CD8-positive, alpha-beta T cell (primary cell): ENCODE measurements at regions of chr5 and their contacts with region 1.

Region 1: GRCh38 chr5:137754126-137754960 is at the start of gene HNRNPA0:
- DNase-seq: peak; percentile 90 to 99 (median 98)
- ATAC-seq: peak; percentile 82
- H3K4me3 ChIP-seq: peak within 1 kb of the TSS; percentile 92 to 96
- H3K4me3 Mint-ChIP-seq: peak within 1 kb of the TSS; percentile 99
- H3K27ac ChIP-seq: peak within 1 kb of the TSS; percentile 98 to 100
- H3K27ac Mint-ChIP-seq: peak within 1 kb of the TSS; percentile 100
- H3K4me1 ChIP-seq: peaks cover 26% of the 10 kb centered on the region
- H3K4me1 Mint-ChIP-seq: peaks cover 32% of the 10 kb centered on the region
- H3K27me3 ChIP-seq: no peaks in the 10 kb centered on the region
- H3K27me3 Mint-ChIP-seq: no peaks in the 10 kb centered on the region
- CTCF ChIP-seq: no peak
- total RNA-seq, gene HNRNPA0: 53.7 to 57.0 TPM

Region 2: GRCh38 chr5:137531266-137531665 is 223.1 kb before region 1 on chr5:
- CTCF ChIA-PET with region 1: no interaction called
- POLR2A ChIA-PET with region 1: no interaction called
- intact Hi-C with region 1: no loop called
- DNase-seq: no peak
- ATAC-seq: no peak
- H3K4me3 ChIP-seq: no peak overlapping the region
- H3K4me3 Mint-ChIP-seq: no peak overlapping the region
- H3K27ac ChIP-seq: no peak overlapping the region
- H3K27ac Mint-ChIP-seq: no peak overlapping the region
- H3K4me1 ChIP-seq: no peaks in the 10 kb centered on the region
- H3K4me1 Mint-ChIP-seq: no peaks in the 10 kb centered on the region
- H3K27me3 ChIP-seq: no peaks in the 10 kb centered on the region
- H3K27me3 Mint-ChIP-seq: peaks cover 12% of the 10 kb centered on the region
- CTCF ChIP-seq: no peak

Region 3: DNA sequence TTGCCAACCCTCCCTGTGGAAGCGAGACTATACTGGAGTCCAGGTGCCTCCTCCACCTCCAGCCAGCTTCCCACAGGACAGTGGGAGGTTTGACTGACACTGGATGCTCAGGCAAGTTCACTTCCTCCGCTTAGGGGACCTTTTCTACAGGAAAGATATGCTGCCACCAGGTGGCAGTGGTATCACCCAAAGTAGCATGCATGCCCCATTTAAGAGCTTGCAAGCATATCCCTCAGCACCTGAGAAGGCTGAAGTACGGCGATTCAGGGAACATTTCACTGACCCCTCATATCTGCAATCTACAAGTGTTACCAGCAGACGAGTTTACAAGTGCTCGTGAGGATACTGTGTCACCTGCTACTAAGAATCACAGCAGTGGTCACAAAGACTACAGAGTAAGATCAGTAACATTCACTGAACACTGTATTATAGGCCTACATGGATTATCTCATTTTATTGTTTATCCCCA is 94.0 kb before region 1 on chr5:
- CTCF ChIA-PET with region 1: interaction called, 652 read pairs
- POLR2A ChIA-PET with region 1: interaction called, 10 read pairs
- intact Hi-C with region 1: no loop called
- DNase-seq: peak; percentile 37 to 84 (median 74)
- ATAC-seq: peak; percentile 94
- H3K4me3 ChIP-seq: no peak overlapping the region
- H3K4me3 Mint-ChIP-seq: no peak overlapping the region
- H3K27ac ChIP-seq: no peak overlapping the region
- H3K27ac Mint-ChIP-seq: no peak overlapping the region
- H3K4me1 ChIP-seq: no peaks in the 10 kb centered on the region
- H3K4me1 Mint-ChIP-seq: peaks cover 11% of the 10 kb centered on the region
- H3K27me3 ChIP-seq: no peaks in the 10 kb centered on the region
- H3K27me3 Mint-ChIP-seq: no peaks in the 10 kb centered on the region
- CTCF ChIP-seq: peak; percentile 75

Region 4: DNA sequence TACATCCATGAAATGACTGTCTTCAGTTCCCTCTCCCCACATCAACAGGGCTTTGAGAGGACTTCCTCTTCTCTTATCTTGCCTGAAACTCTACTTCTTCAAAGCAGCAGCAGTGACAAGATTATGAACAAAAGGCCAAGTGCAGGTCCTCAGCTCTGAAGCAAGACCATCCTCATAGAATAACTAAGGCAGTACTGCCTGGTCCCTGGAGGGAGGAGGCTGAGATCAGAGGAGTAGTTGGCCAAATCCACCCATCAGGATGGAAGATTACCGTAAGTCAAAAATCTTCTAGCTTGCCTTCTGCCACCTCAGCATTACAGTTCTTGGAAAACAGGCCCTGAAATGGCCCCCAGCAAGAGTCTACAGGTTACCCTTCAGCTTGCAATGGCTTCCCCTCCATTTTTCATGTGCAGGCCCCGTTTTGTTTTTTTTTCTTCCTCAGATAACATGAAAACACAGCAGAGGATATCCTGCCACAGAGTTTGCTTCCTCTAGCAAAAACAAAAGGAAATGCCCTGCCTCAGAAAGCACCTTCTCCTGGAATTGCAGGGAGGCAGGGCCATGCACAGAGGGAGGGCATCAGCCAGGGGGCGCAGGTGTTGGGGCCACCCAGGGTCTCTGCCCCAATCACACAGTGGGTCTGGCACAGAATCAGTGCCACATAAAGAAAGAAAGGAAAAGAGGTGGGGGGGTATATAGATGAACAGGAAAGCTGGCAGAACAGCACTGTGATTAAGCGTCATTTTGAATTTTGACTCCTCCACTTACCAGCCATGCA is 58.5 kb before region 1 on chr5:
- CTCF ChIA-PET with region 1: interaction called, 5 read pairs
- POLR2A ChIA-PET with region 1: interaction called, 15 read pairs
- intact Hi-C with region 1: no loop called
- DNase-seq: peak in 8 of 9 experiments; percentile 13 to 72 (median 22)
- ATAC-seq: peak; percentile 76
- H3K4me3 ChIP-seq: no peak overlapping the region
- H3K4me3 Mint-ChIP-seq: peak overlapping the region; percentile 68
- H3K27ac ChIP-seq: peak overlapping the region; percentile 32 to 66
- H3K27ac Mint-ChIP-seq: peak overlapping the region; percentile 95
- H3K4me1 ChIP-seq: peaks cover 41% of the 10 kb centered on the region
- H3K4me1 Mint-ChIP-seq: peaks cover 55% of the 10 kb centered on the region
- H3K27me3 ChIP-seq: no peaks in the 10 kb centered on the region
- H3K27me3 Mint-ChIP-seq: no peaks in the 10 kb centered on the region
- CTCF ChIP-seq: peak; percentile 23

Region 5: GRCh38 chr5:137743031-137743640 is 11.2 kb before region 1 on chr5:
- CTCF ChIA-PET with region 1: interaction called, 28 read pairs
- POLR2A ChIA-PET with region 1: interaction called, 38 read pairs
- intact Hi-C with region 1: loop called in 1 of 2 experiments (anchors 1 kb)
- DNase-seq: peak in 8 of 9 experiments; percentile 43 to 85 (median 64)
- ATAC-seq: peak; percentile 95
- H3K4me3 ChIP-seq: no peak overlapping the region
- H3K4me3 Mint-ChIP-seq: no peak overlapping the region
- H3K27ac ChIP-seq: no peak overlapping the region
- H3K27ac Mint-ChIP-seq: no peak overlapping the region
- H3K4me1 ChIP-seq: peaks cover 17% of the 10 kb centered on the region
- H3K4me1 Mint-ChIP-seq: peaks cover 17% of the 10 kb centered on the region
- H3K27me3 ChIP-seq: no peaks in the 10 kb centered on the region
- H3K27me3 Mint-ChIP-seq: no peaks in the 10 kb centered on the region
- CTCF ChIP-seq: peak; percentile 74

Region 6: GRCh38 chr5:137808503-137809205 is 54.3 kb after region 1 on chr5:
- CTCF ChIA-PET with region 1: no interaction called
- POLR2A ChIA-PET with region 1: no interaction called
- intact Hi-C with region 1: no loop called
- DNase-seq: no peak
- ATAC-seq: no peak
- H3K4me3 ChIP-seq: no peak overlapping the region
- H3K4me3 Mint-ChIP-seq: no peak overlapping the region
- H3K27ac ChIP-seq: no peak overlapping the region
- H3K27ac Mint-ChIP-seq: no peak overlapping the region
- H3K4me1 ChIP-seq: no peaks in the 10 kb centered on the region
- H3K4me1 Mint-ChIP-seq: no peaks in the 10 kb centered on the region
- H3K27me3 ChIP-seq: no peaks in the 10 kb centered on the region
- H3K27me3 Mint-ChIP-seq: no peaks in the 10 kb centered on the region
- CTCF ChIP-seq: no peak

Region 7: DNA sequence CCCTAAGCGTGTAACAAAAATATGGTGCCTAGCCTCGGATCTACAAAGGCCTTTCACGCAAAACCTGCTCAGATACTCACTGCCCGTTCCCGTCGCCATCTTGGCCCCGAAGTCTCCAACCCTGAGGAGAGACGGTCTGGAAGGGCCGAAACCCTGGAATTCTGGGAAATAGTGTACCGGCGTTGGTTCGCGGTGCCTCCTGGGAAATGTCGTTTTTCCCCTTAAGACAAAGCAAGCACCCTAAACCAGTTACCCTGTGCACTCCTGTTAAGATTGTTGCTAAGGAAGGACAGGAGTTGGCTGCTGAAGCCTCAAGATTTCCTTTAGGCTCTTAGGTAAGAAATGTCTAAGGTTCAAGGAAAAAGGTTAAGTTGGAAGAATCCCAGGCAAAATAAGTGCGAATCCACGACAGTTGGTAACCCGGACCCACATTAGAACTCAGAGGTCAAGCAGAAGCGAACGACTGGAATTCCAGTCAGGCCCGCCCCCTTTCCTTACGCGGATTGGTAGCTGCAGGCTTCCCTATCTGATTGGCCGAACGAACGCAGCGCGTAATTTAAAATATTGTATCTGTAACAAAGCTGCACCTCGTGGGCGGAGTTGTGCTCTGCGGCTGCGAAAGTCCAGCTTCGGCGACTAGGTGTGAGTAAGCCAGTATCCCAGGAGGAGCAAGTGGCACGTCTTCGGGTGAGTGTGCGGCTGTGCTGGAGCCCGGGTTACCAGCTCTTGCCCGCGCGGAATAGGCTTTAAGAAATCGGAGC is 424.4 kb after region 1 on chr5 and contains the starts of genes BRD8 and KIF20A:
- CTCF ChIA-PET with region 1: no interaction called
- POLR2A ChIA-PET with region 1: interaction called, 5 read pairs
- intact Hi-C with region 1: loop called in 1 of 2 experiments (anchors 1 kb)
- DNase-seq: peak; percentile 74 to 94 (median 88)
- ATAC-seq: peak; percentile 88
- H3K4me3 ChIP-seq: peak within 1 kb of the TSS; percentile 67 to 92
- H3K4me3 Mint-ChIP-seq: peak within 1 kb of the TSS; percentile 46
- H3K27ac ChIP-seq: peak within 1 kb of the TSS; percentile 42 to 77
- H3K27ac Mint-ChIP-seq: no peak within 1 kb of the TSS
- H3K4me1 ChIP-seq: peaks cover 15% of the 10 kb centered on the region
- H3K4me1 Mint-ChIP-seq: peaks cover 10% of the 10 kb centered on the region
- H3K27me3 ChIP-seq: no peaks in the 10 kb centered on the region
- H3K27me3 Mint-ChIP-seq: no peaks in the 10 kb centered on the region
- CTCF ChIP-seq: no peak
- total RNA-seq, gene BRD8: 13.0 to 15.0 TPM
- total RNA-seq, gene KIF20A: 0.19 TPM in 1 of 2 experiments, not detected in the other

Region 8: DNA sequence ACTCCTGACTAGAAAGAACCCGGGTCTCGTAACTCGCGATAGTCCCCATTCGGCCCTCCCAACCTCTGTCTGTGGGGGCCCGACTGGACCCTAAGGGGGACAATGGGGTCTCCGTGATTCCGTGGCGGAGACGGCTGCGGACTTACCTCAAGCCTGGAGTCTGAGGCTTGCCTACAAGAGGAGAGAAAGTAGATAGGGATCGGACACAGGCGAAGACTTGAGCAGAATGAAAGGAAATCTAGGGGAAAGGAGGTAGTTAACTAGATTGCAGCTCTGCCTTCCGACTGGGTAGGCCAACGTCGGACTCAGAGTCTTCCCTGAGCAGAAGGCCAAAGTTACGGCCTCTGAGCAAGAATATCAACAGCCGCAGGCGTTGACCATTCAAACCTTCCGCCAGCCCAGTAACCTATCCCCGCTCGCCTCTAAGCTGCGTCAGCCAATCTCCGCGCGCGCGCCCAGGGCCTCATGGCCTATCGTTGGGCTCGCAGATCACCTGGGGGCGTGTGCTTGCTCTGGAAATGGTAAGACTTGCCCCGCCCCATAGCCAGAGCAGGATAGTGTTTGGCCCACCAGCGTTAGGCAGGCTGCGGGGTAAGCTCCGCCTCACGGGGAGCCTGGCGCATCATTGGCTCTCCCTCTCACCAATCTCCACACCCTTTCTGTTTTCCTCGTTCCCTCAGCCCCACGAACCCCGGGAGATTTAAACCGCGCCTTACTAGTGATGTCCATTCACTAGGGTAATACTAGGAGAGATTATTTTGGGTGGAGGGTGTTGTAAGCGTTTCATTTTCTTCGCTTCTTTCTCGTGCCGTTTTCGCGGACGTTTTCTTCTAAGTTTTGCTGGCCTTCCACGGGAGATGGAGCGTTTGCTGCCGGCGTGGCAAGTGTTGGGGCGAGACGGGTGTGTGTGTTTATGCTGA is 577.4 kb after region 1 on chr5 and contains the start of gene CDC25C:
- CTCF ChIA-PET with region 1: no interaction called
- POLR2A ChIA-PET with region 1: no interaction called
- intact Hi-C with region 1: loop called (anchors 2 to 5 kb)
- DNase-seq: peak; percentile 91 to 99 (median 95)
- ATAC-seq: peak; percentile 100
- H3K4me3 ChIP-seq: peak within 1 kb of the TSS; percentile 52 to 69
- H3K4me3 Mint-ChIP-seq: peak within 1 kb of the TSS; percentile 86
- H3K27ac ChIP-seq: peak within 1 kb of the TSS in 1 of 2 experiments; percentile 58
- H3K27ac Mint-ChIP-seq: peak within 1 kb of the TSS; percentile 45
- H3K4me1 ChIP-seq: peaks cover 5% of the 10 kb centered on the region
- H3K4me1 Mint-ChIP-seq: peaks cover 16% of the 10 kb centered on the region
- H3K27me3 ChIP-seq: no peaks in the 10 kb centered on the region
- H3K27me3 Mint-ChIP-seq: no peaks in the 10 kb centered on the region
- CTCF ChIP-seq: no peak
- total RNA-seq, gene CDC25C: not detected

Region 9: DNA sequence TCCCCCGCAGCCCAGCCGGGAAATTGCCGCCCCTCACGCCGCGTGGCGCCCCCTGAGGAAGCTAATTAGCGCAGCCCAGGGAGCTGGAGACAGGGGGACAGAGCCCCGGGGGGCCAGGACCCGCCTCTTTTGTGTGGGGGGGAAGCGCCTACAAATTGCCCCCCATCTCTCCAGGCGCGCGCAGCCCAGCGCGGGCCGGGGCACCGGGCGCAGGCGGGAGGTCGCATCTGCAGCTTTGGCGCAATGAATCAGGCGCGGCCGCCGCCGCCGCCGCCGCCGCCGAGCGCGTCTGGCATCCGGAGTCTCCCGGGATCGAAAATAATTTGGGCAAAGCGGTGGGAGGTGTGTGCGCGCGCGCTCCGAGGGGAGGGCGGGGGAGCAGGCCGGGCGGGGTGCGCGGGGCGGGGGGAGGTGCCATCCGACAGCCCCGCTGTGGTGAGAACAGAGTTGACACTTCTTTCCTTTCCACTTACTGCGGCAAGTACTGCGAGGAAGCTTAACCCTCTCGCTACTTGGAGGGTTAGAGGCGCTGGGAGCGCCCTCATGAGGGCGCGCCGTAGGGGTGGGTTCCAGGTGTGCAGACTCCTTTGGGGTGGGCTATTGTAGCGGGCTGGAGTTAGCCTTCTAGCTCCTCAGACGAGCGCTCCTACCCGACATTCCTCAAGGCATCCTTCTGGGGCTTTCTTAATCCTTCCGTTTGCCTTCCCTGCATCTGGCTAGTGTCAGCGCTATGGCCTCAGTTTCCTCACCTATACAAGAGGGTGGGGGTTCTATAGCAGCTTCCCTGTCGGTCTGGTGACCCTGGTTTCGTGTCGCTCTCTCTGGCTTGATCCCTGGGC is 1956.9 kb after region 1 on chr5:
- CTCF ChIA-PET with region 1: no interaction called
- POLR2A ChIA-PET with region 1: no interaction called
- intact Hi-C with region 1: loop called in 1 of 2 experiments (anchors 10 kb)
- DNase-seq: peak; percentile 32 to 90 (median 71)
- ATAC-seq: peak; percentile 60
- H3K4me3 ChIP-seq: peak overlapping the region; percentile 63 to 64
- H3K4me3 Mint-ChIP-seq: peak overlapping the region; percentile 77
- H3K27ac ChIP-seq: peak overlapping the region; percentile 66 to 84
- H3K27ac Mint-ChIP-seq: no peak overlapping the region
- H3K4me1 ChIP-seq: peaks cover 28% of the 10 kb centered on the region
- H3K4me1 Mint-ChIP-seq: peaks cover 39% of the 10 kb centered on the region
- H3K27me3 ChIP-seq: no peaks in the 10 kb centered on the region
- H3K27me3 Mint-ChIP-seq: no peaks in the 10 kb centered on the region
- CTCF ChIP-seq: no peak